ENCODE measurements at regions of chr17 and their contacts with region 1.

Region 1: DNA sequence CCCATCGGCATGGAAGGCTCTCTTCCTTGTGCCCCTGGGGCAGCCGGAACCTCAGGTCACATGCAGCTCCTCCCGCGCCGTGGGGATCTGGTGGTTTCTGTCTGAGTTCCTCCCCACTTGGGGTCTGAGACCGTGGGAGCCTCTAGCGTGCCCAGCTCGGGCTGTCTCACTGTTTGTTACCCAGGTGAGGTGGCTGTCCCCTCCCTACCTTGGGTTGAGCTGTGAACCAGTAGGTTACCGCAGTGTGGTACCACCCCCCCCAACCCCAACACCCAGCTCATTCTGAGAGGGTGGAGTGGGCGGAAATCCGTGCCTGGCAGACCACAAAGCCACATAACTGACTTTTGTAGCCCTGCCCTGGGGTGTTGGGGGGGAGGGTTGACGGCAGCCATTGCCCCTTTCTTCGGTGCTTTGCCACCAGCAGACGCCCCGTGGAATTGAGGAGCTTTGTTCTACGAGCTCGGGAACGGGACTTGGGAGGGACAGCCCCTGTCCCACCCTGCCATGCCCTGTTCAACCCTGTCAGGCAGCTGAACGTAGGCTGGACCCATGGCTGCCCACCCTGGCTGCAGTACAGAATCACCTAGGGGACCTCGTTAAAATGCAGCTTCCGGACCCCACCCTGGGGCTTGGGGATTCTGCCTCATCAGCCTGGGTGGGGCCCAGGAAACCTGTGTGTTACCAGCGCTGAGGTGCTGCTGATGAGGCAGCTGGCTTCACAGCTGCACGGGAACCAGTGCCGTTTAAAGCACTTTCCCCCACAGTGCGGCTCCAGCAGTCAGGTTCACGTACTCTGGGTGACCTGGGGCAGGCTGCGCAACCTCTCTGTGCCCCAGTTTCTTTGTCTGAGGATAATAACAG is 18.5 kb downstream of the RAP1GAP2 start:
- DNase-seq: peak; percentile 90 to 99 (median 98)
- H3K4me3 ChIP-seq: peak overlapping the region; percentile 68
- H3K4me3 Mint-ChIP-seq: peak overlapping the region; percentile 73 to 93 (median 84)
- H3K27ac ChIP-seq: peak overlapping the region; percentile 78
- H3K27ac Mint-ChIP-seq: peak overlapping the region; percentile 83 to 96 (median 91)
- H3K4me1 ChIP-seq: peaks cover 30% of the 10 kb centered on the region
- H3K4me1 Mint-ChIP-seq: peaks cover 33 to 53% (median 45%) of the 10 kb centered on the region in 3 donors
- H3K27me3 ChIP-seq: no peaks in the 10 kb centered on the region
- H3K27me3 Mint-ChIP-seq: no peaks in the 10 kb centered on the region

Region 2: DNA sequence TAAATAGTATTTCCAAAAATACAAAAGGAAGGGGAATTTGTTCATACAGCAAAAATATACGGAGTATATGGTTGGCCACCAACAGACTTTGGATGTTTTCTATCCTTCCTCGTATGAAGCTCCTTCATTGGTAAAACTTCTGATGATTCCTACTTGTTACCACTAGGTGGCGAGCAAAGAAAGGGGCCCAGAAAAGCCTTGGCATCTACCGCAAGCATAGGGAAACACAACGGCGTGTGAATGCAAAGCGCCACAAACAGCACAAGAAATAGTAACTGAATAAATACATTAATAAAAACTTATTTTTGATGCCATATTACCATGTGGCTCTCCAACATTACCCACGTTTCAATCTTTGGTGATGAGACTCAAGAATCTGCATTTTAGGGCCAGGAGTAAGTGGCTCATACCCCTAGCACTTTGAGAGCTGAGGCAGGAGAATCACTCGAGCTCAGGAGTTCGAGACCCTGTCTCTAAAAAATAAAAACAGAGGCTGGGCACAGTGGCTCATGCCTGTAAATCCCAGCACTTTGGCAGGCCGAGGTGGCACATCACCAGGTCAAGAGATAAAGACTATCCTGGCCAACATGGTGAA is 1449.2 kb before region 1 on chr17:
- CTCF ChIA-PET with region 1: no interaction called
- POLR2A ChIA-PET with region 1: no interaction called
- DNase-seq: peak; percentile 42 to 77 (median 71)
- H3K4me3 ChIP-seq: no peak overlapping the region
- H3K4me3 Mint-ChIP-seq: peak overlapping the region in 2 of 7 donors; percentile 10 to 19
- H3K27ac ChIP-seq: no peak overlapping the region
- H3K27ac Mint-ChIP-seq: peak overlapping the region; percentile 55 to 82 (median 76)
- H3K4me1 ChIP-seq: peaks cover 50% of the 10 kb centered on the region
- H3K4me1 Mint-ChIP-seq: peaks cover 51 to 81% (median 77%) of the 10 kb centered on the region in 3 donors
- H3K27me3 ChIP-seq: no peaks in the 10 kb centered on the region
- H3K27me3 Mint-ChIP-seq: no peaks in the 10 kb centered on the region

Region 3: GRCh38 chr17:2796164-2797125 is 18.3 kb before region 1 on chr17 and contains the start of gene RAP1GAP2:
- CTCF ChIA-PET with region 1: interaction called, 62 read pairs
- POLR2A ChIA-PET with region 1: interaction called, 54 read pairs
- DNase-seq: peak; percentile 64 to 86 (median 78)
- H3K4me3 ChIP-seq: peak within 1 kb of the TSS; percentile 75
- H3K4me3 Mint-ChIP-seq: peak within 1 kb of the TSS; percentile 94 to 98 (median 96)
- H3K27ac ChIP-seq: peak within 1 kb of the TSS; percentile 32
- H3K27ac Mint-ChIP-seq: peak within 1 kb of the TSS; percentile 71 to 89 (median 86)
- H3K4me1 ChIP-seq: peaks cover 60% of the 10 kb centered on the region
- H3K4me1 Mint-ChIP-seq: peaks cover 84 to 91% (median 87%) of the 10 kb centered on the region in 3 donors
- H3K27me3 ChIP-seq: no peaks in the 10 kb centered on the region
- H3K27me3 Mint-ChIP-seq: peaks cover 0 to 5% of the 10 kb centered on the region in 2 donors
- total RNA-seq, gene RAP1GAP2: 1.2 to 1.4 TPM

Region 4: DNA sequence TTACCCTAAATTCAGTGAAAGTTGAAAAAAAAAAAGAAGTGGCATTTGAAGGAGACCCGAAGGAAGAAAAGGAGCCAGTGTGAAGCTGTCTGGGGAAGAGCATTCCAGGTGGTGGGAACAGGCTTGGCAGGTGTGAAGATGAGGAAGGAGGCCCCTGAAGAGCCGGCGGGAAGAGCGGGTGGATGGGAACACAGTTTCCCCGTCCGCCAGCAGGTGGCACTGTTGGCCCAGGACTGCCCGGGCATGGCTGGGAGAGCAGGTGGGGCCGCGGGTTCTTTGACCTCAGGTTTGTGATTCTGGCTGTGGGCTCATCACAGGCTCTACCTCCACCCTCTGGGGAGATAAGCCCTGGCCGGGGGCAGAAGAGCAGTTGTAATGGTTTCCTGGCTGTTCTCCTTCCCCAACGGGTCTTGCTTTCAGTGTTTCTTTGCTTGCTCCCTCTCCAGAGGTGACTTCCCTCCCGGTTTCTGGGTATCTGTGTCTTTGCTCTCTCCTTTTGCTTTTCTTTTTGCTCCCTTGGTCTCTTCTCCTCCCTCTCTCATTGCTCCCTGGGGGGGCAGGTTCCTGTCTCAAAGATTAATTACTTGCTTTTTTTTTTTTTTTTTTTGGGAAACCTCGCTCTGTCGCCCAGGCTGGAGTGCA is 13.8 kb after region 1 on chr17:
- CTCF ChIA-PET with region 1: interaction called, 26 read pairs
- POLR2A ChIA-PET with region 1: interaction called, 6 read pairs
- DNase-seq: peak; percentile 62 to 80 (median 68)
- H3K4me3 ChIP-seq: no peak overlapping the region
- H3K4me3 Mint-ChIP-seq: peak overlapping the region in 6 of 7 donors; percentile 41 to 77 (median 58)
- H3K27ac ChIP-seq: no peak overlapping the region
- H3K27ac Mint-ChIP-seq: peak overlapping the region in 5 of 8 donors; percentile 30 to 73 (median 54)
- H3K4me1 ChIP-seq: peaks cover 13% of the 10 kb centered on the region
- H3K4me1 Mint-ChIP-seq: peaks cover 24 to 42% (median 35%) of the 10 kb centered on the region in 3 donors
- H3K27me3 ChIP-seq: no peaks in the 10 kb centered on the region
- H3K27me3 Mint-ChIP-seq: no peaks in the 10 kb centered on the region

Measured in CD8-positive, alpha-beta memory T cell (primary cell).